AG04450 (cell line): ENCODE measurements at regions of chr3 and their contacts with region 1.

Region 1: GRCh38 chr3:115147329-115148141 is 447 bp upstream of the ZBTB20 start:
- DNase-seq: peak; percentile 100
- H3K4me3 ChIP-seq: peak overlapping the region; percentile 74
- H3K27ac ChIP-seq: peak overlapping the region; percentile 89
- H3K27me3 ChIP-seq: no peaks in the 10 kb centered on the region
- CTCF ChIP-seq: no peak

Region 2: DNA sequence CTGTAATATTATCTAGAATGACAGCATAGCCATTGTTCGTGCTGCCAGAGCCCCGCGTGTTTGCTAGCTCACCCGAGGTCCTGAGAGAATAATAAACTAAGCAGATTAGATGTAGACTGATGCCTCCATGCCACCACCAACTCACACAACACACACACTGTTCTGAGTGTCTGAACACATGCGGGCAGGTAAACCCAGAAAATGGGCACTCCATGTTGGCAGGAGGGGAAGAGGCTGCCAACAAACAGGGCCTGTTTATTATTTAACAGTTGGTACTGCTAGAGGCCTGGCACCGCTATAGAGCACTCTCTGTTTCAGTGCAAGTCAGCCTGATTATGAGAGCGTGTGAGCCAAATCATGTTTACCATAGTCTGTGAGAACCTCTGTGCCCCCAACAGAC is 299.5 kb before region 1 on chr3:
- CTCF ChIA-PET with region 1: no interaction called
- POLR2A ChIA-PET with region 1: no interaction called
- DNase-seq: no peak
- H3K4me3 ChIP-seq: no peak overlapping the region
- H3K27ac ChIP-seq: no peak overlapping the region
- H3K27me3 ChIP-seq: no peaks in the 10 kb centered on the region
- CTCF ChIP-seq: no peak

Region 3: DNA sequence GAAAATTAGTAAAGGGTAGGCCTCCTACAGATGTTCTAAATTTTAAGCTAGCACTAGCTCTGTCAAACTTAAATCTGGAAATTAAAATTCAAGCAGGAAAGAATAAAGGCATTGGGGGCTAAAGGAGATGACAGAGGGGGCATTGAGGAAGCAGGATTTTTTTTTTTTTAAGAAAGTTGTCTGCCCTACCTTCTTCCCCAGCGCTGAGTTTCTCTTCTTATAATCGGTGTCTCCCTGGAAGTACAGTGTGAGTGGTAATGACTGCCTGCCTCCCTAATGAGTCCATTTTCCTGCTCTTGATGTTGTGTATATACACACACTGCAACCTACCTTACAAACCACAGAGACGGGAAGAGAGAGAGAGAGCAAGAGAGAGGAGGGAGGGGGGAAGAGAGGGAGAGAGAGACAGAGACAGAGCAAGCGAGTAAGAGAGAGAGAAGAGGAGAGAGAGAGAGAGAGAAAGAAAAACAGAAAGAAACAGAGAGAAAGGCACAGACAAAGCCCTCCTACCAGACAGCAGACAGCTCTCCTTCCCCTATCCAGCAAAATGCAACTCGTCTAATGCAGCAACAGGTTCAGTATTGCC is 47.5 kb before region 1 on chr3:
- CTCF ChIA-PET with region 1: no interaction called
- POLR2A ChIA-PET with region 1: interaction called, 10 read pairs
- DNase-seq: peak; percentile 33
- H3K4me3 ChIP-seq: peak overlapping the region; percentile 54
- H3K27ac ChIP-seq: peak overlapping the region; percentile 32
- H3K27me3 ChIP-seq: no peaks in the 10 kb centered on the region
- CTCF ChIP-seq: no peak

Region 4: DNA sequence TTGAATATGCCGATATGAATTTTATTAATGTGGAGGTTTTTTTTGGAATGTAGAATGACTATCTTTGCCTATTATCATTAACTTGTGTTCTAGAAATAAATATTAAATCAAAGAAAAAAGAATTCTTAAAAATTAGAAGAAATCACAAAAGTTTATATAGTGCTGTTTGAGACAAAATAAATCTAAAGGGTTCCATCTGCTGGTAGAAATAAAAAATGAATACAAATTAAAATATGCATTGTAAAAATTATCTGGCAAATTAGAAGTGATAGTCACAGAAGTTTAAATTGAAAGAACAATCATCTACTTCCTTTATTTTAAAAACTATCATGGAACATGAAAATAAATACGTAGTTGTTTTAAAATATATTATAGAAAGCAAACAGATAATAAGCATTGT is 22.3 kb after region 1 on chr3:
- CTCF ChIA-PET with region 1: interaction called, 10 read pairs
- POLR2A ChIA-PET with region 1: no interaction called
- DNase-seq: no peak
- H3K4me3 ChIP-seq: no peak overlapping the region
- H3K27ac ChIP-seq: no peak overlapping the region
- H3K27me3 ChIP-seq: no peaks in the 10 kb centered on the region
- CTCF ChIP-seq: 0 out of 2 replicates have a peak, but pooled peaks have one; percentile 5